IMR-90 (cell line): ENCODE measurements at regions of chrX and their contacts with region 1.

Region 1: GRCh38 chrX:150365051-150365989 is 2.2 kb downstream of the MAMLD1 start:
- DNase-seq: peak; percentile 50
- ATAC-seq: peak; percentile 30
- H3K4me3 ChIP-seq: peak overlapping the region; percentile 83
- H3K27ac ChIP-seq: peak overlapping the region; percentile 92
- H3K4me1 ChIP-seq: peaks cover 2% of the 10 kb centered on the region
- H3K27me3 ChIP-seq: no peaks in the 10 kb centered on the region
- CTCF ChIP-seq: peak; percentile 56
- POLR2A ChIP-seq: 0 out of 2 replicates have a peak, but pooled peaks have one; percentile 8
- RAD21 ChIP-seq: peak; percentile 32

Region 2: DNA sequence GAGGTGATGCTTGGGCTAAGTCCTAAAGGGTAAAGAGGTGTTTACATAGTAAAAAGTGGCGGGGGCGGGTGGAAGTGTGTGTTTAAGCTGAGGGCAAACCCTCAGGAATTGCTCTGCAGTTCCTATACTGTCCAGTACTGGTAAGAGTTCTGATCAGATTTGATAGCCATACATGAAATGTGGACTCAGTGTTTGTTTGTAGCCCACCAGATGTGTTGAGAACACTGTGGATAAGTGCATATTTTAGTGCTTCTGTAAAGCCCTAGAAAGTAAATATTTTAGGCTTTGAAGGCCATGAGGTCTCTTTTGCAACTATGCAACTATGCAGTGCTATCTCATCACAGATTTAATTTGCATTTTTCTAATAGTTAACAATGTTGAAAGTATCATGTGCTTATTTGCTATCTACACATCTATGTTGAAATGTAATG is 346.4 kb before region 1 on chrX:
- CTCF ChIA-PET with region 1: no interaction called
- POLR2A ChIA-PET with region 1: no interaction called
- dilution Hi-C with region 1: no loop called
- in situ Hi-C with region 1: no loop called
- intact Hi-C with region 1: loop called (anchors 2 kb)
- DNase-seq: peak; percentile 82
- ATAC-seq: peak; percentile 94
- H3K4me3 ChIP-seq: no peak overlapping the region
- H3K27ac ChIP-seq: peak overlapping the region; percentile 78; the same call in 1 of the 2 replicates
- H3K4me1 ChIP-seq: peaks cover 2% of the 10 kb centered on the region
- H3K27me3 ChIP-seq: no peaks in the 10 kb centered on the region
- CTCF ChIP-seq: no peak
- POLR2A ChIP-seq: no peak
- RAD21 ChIP-seq: no peak

Region 3: DNA sequence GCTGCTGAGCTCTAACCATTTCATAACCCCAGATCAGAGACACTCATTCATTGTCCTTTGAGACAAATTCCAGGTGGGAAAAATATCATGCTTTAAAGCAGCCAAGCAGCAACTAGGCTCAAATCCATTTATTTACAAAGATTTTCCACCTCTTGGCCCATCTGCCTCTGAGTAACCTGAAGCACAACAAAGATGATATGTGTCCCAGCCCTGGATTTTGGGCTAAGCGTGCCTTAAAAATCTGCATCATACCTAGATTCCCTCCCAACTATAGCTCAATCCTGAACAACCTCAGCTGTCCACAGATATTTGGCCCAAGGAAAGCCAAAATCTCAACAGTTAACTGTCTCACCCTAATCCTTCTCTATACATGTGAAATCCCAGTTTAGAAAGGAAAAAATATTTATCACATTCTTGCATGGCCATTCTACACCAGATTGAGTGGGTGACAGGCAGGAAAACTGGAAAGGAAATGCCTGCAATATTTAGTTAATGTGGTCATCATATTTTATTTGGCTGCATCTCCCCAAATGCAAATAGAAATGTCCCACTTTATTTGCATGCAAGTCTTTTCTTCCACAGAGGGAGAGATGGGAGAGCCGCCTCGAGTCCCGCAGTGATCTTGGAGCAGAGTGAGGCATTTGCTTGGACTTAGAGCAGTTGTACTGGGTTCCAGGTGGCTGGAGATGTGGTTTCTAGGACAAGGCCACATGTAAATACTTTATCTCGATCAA is 280.7 kb before region 1 on chrX:
- CTCF ChIA-PET with region 1: interaction called, 4 read pairs
- POLR2A ChIA-PET with region 1: interaction called, 3 read pairs
- dilution Hi-C with region 1: no loop called
- in situ Hi-C with region 1: no loop called
- intact Hi-C with region 1: loop called (anchors 1 kb)
- DNase-seq: peak; percentile 77
- ATAC-seq: peak; percentile 72
- H3K4me3 ChIP-seq: no peak overlapping the region
- H3K27ac ChIP-seq: peak overlapping the region; percentile 90
- H3K4me1 ChIP-seq: peaks cover 10% of the 10 kb centered on the region
- H3K27me3 ChIP-seq: no peaks in the 10 kb centered on the region
- CTCF ChIP-seq: no peak
- POLR2A ChIP-seq: no peak
- RAD21 ChIP-seq: no peak

Region 4: GRCh38 chrX:150334981-150335380 is 30.3 kb before region 1 on chrX:
- CTCF ChIA-PET with region 1: no interaction called
- POLR2A ChIA-PET with region 1: no interaction called
- dilution Hi-C with region 1: no loop called
- in situ Hi-C with region 1: no loop called
- intact Hi-C with region 1: no loop called
- DNase-seq: no peak
- ATAC-seq: no peak
- H3K4me3 ChIP-seq: no peak overlapping the region
- H3K27ac ChIP-seq: no peak overlapping the region
- H3K4me1 ChIP-seq: no peaks in the 10 kb centered on the region
- H3K27me3 ChIP-seq: peaks cover 5% of the 10 kb centered on the region; the same call in 1 of the 2 replicates
- CTCF ChIP-seq: no peak
- POLR2A ChIP-seq: no peak
- RAD21 ChIP-seq: no peak

Region 5: DNA sequence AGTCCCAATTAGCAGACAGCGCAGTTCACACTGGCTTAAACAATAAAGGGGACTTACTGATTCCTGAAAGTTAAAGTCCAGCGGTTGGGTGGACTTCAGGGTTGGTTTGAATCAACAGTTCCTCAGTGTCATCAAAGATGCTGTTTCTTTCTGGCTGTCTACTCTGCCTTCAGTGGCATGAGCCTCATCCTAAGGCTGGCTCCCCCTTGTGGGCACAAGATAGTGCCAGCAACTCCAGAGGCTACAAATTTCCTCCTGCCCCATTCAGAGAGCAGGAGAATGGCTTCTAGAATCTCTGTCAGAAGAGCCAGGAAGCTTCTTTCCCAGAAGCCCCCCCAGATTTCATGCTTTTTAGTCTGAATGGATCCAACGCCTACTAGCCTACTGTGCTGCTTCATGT is 120.7 kb after region 1 on chrX:
- CTCF ChIA-PET with region 1: no interaction called
- POLR2A ChIA-PET with region 1: no interaction called
- dilution Hi-C with region 1: no loop called
- in situ Hi-C with region 1: no loop called
- intact Hi-C with region 1: loop called (anchors 1 kb)
- DNase-seq: peak; percentile 59
- ATAC-seq: peak; percentile 75
- H3K4me3 ChIP-seq: no peak overlapping the region
- H3K27ac ChIP-seq: no peak overlapping the region
- H3K4me1 ChIP-seq: peaks cover 3% of the 10 kb centered on the region; the same call in 1 of the 2 replicates
- H3K27me3 ChIP-seq: no peaks in the 10 kb centered on the region
- CTCF ChIP-seq: peak; percentile 57
- POLR2A ChIP-seq: no peak
- RAD21 ChIP-seq: peak; percentile 63

Region 6: GRCh38 chrX:150683536-150684146 is 318.3 kb after region 1 on chrX:
- CTCF ChIA-PET with region 1: no interaction called
- POLR2A ChIA-PET with region 1: no interaction called
- dilution Hi-C with region 1: no loop called
- in situ Hi-C with region 1: no loop called
- intact Hi-C with region 1: loop called (anchors 10 kb)
- DNase-seq: peak; percentile 33
- ATAC-seq: peak; percentile 32; the same call in 1 of the 2 replicates
- H3K4me3 ChIP-seq: no peak overlapping the region
- H3K27ac ChIP-seq: no peak overlapping the region
- H3K4me1 ChIP-seq: peaks cover 4% of the 10 kb centered on the region
- H3K27me3 ChIP-seq: no peaks in the 10 kb centered on the region
- CTCF ChIP-seq: peak; percentile 51
- POLR2A ChIP-seq: no peak
- RAD21 ChIP-seq: peak; percentile 37